ENCODE measurements at regions of chr5 and their contacts with region 1.

Region 1: DNA sequence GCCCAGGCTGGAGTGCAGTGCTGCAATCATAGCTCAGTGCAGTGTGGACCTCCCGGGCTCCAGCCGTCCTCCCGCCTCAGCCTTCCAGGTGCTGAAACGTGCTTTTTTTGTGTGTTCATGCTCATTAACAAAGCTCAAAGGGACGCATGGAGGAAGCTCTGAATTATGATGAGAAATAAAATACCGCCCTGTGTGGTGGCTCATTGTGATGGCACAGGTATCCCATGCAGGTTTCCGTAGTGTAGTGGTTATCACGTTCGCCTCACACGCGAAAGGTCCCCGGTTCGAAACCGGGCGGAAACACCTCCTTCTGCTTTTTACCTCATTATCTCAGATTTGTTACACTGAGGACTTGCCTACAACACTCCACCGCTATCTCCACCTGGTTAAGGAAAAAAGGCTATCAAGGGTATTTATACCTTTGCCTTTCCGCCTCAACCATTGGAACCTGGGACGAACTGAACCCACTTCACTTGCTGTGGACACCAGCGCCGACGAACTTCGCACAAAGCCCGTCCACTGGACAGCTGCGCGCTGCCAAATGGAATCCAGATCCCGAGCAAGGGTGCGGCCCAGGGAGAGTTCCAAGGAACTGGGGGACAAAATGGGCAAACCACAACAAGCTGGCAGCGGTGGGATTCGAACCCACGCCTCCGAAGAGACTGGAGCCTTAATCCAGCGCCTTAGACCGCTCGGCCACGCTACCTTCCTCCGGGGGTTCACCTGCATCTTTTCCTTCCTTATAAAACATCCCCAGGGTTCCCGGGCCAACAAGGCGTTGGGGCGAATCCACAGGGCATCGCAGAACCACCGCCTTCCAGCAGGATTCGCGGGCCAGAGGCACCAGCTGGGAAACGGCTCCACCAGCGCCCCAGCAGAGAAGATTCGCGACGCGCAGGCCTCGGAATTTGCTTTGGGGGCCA is 26.3 kb downstream of the OR2V2 start:
- DNase-seq: peak; percentile 72
- H3K27ac ChIP-seq: no peak overlapping the region
- CTCF ChIP-seq: peak; percentile 61

Region 2: DNA sequence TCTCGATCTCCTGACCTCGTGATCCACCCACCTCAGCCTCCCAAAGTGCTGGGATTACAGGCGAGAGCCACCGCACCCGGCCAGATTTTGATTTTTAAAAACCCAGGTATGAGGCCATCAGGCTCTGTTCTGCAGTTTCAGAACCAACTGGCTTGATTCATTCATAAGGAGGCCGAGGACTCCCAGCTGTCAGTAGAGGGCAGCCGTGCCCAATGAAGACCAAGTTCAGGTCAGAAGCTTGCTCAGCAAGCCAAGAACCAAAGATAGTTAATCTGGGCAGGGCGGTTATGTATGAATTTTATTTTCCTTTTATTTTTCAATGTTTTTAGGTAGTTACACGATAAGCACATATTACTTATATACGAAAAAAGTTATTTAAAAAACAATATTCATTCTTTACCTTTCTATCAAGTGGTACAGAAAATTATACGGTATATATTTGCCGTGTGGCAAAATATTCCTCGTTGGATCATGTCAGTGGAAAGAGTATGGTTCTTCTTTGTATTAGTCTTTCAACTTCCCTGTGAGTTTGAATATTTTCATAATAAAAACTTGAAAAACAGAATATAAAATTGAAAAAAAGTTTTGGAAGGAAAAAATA is 389.1 kb before region 1 on chr5:
- CTCF ChIA-PET with region 1: interaction called, 10 read pairs
- POLR2A ChIA-PET with region 1: no interaction called
- DNase-seq: peak; percentile 90
- H3K27ac ChIP-seq: no peak overlapping the region
- CTCF ChIP-seq: peak; percentile 95

Region 3: DNA sequence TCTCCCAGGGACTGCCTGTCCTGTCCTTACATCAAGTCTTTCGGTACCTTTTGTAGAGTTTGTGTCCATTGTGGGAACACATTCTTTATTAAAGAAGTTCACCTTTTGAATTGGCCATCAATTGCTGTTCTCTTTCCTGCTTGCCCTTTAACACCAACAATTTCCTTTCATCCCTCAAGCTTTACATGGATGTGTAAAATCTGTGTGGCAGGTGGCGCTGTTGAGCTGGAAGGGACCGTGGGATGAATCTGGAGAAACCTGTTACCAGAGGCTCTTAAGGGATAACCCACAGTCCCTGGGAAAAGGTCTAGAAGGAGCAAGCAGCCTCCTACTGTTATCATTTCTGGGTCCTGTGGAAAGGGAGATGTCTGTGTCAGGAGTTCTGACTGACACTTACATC is 304.7 kb before region 1 on chr5:
- CTCF ChIA-PET with region 1: interaction called, 17 read pairs
- POLR2A ChIA-PET with region 1: no interaction called
- DNase-seq: peak; percentile 93
- H3K27ac ChIP-seq: no peak overlapping the region
- CTCF ChIP-seq: peak; percentile 90

Region 4: DNA sequence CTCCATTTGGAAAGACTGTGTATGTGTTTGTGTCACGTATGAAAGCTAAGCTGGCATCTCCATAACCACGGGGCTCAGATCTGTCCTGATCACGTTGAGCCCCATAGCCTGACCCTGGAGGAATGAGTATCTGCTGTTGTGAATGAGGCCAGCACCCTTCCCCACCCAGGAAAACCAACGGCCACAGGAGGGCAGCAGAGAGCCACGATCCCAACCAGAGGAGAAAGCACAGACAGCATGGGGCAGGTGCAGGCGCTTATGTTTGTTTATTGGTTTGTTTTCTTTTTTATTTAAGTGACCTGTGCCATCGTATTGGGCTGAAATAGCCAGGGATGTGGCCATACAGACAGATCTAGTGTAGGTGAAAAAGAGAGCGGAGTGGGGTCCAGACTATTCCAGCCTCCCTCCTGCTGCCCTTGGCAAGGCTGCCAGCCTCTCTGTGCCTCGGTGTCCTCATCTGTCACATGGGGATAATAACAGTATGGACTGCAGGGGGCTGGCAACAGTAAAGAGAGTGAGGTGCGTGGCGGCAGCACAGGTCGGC is 14.3 kb before region 1 on chr5:
- CTCF ChIA-PET with region 1: interaction called, 26 read pairs
- POLR2A ChIA-PET with region 1: no interaction called
- DNase-seq: peak; percentile 92
- H3K27ac ChIP-seq: peak overlapping the region; percentile 75; the same call in 1 of the 2 replicates
- CTCF ChIP-seq: peak; percentile 97

Region 5: GRCh38 chr5:181184857-181185251 is 11.2 kb after region 1 on chr5:
- CTCF ChIA-PET with region 1: interaction called, 24 read pairs
- POLR2A ChIA-PET with region 1: interaction called, 3 read pairs
- DNase-seq: no peak
- H3K27ac ChIP-seq: peak overlapping the region; percentile 79
- CTCF ChIP-seq: no peak

Region 6: GRCh38 chr5:181191529-181192394 is 18.1 kb after region 1 on chr5:
- CTCF ChIA-PET with region 1: interaction called, 24 read pairs
- POLR2A ChIA-PET with region 1: interaction called, 4 read pairs
- DNase-seq: peak; percentile 91
- H3K27ac ChIP-seq: peak overlapping the region; percentile 93
- CTCF ChIP-seq: no peak